Activated CD8-positive, alpha-beta T cell treated with anti-CD3 and anti-CD28 coated beads, Interleukin-2, amount 10 ng/mL, durations not matched to agents 7 days and 5 days (primary cell): ENCODE measurements at regions of chr1 and their contacts with region 1.

Region 1: GRCh38 chr1:26677306-26678115 is 18.3 kb upstream of the ARID1A start:
- DNase-seq: peak; percentile 66
- ATAC-seq: peak; percentile 96
- H3K4me3 Mint-ChIP-seq: no peak overlapping the region
- H3K27ac Mint-ChIP-seq: peak overlapping the region; percentile 47
- H3K4me1 Mint-ChIP-seq: peaks cover 21% of the 10 kb centered on the region
- H3K27me3 Mint-ChIP-seq: peaks cover 2% of the 10 kb centered on the region

Region 2: GRCh38 chr1:26666855-26667254 is 10.7 kb before region 1 on chr1:
- CTCF ChIA-PET with region 1: interaction called, 16 read pairs
- POLR2A ChIA-PET with region 1: no interaction called
- DNase-seq: no peak
- ATAC-seq: no peak
- H3K4me3 Mint-ChIP-seq: no peak overlapping the region
- H3K27ac Mint-ChIP-seq: no peak overlapping the region
- H3K4me1 Mint-ChIP-seq: no peaks in the 10 kb centered on the region
- H3K27me3 Mint-ChIP-seq: no peaks in the 10 kb centered on the region

Region 3: GRCh38 chr1:26700711-26701110 is 23.2 kb after region 1 on chr1:
- CTCF ChIA-PET with region 1: interaction called, 11 read pairs
- POLR2A ChIA-PET with region 1: interaction called, 5 read pairs
- DNase-seq: no peak
- ATAC-seq: no peak
- H3K4me3 Mint-ChIP-seq: no peak overlapping the region
- H3K27ac Mint-ChIP-seq: peak overlapping the region; percentile 64
- H3K4me1 Mint-ChIP-seq: peaks cover 8% of the 10 kb centered on the region
- H3K27me3 Mint-ChIP-seq: no peaks in the 10 kb centered on the region

Region 4: GRCh38 chr1:26723013-26723991 is 45.8 kb after region 1 on chr1:
- CTCF ChIA-PET with region 1: no interaction called
- POLR2A ChIA-PET with region 1: no interaction called
- DNase-seq: peak; percentile 48
- ATAC-seq: peak; percentile 68
- H3K4me3 Mint-ChIP-seq: peak overlapping the region; percentile 42
- H3K27ac Mint-ChIP-seq: peak overlapping the region; percentile 56
- H3K4me1 Mint-ChIP-seq: peaks cover 86% of the 10 kb centered on the region
- H3K27me3 Mint-ChIP-seq: no peaks in the 10 kb centered on the region